ENCODE measurements at regions of chr18 and their contacts with region 1.

Region 1: GRCh38 chr18:75350512-75350839 is 77.0 kb downstream of the SMIM21 start:
- DNase-seq: no peak
- ATAC-seq: no peak
- H3K4me3 ChIP-seq: no peak overlapping the region
- H3K4me3 Mint-ChIP-seq: no peak overlapping the region
- H3K27ac ChIP-seq: no peak overlapping the region
- H3K27ac Mint-ChIP-seq: no peak overlapping the region
- H3K4me1 ChIP-seq: no peaks in the 10 kb centered on the region
- H3K4me1 Mint-ChIP-seq: no peaks in the 10 kb centered on the region
- H3K27me3 ChIP-seq: peaks cover 0 to 10% of the 10 kb centered on the region in 2 experiments
- H3K27me3 Mint-ChIP-seq: peaks cover 3 to 15% of the 10 kb centered on the region in 2 donors

Region 2: GRCh38 chr18:75280427-75281280 is 69.8 kb before region 1 on chr18:
- CTCF ChIA-PET with region 1: no interaction called
- POLR2A ChIA-PET with region 1: no interaction called
- DNase-seq: no peak
- ATAC-seq: no peak
- H3K4me3 ChIP-seq: no peak overlapping the region
- H3K4me3 Mint-ChIP-seq: no peak overlapping the region
- H3K27ac ChIP-seq: no peak overlapping the region
- H3K27ac Mint-ChIP-seq: peak overlapping the region; percentile 3 to 52
- H3K4me1 ChIP-seq: peaks cover 2 to 22% of the 10 kb centered on the region in 2 experiments
- H3K4me1 Mint-ChIP-seq: peaks cover 40 to 65% (median 50%) of the 10 kb centered on the region in 3 donors
- H3K27me3 ChIP-seq: no peaks in the 10 kb centered on the region
- H3K27me3 Mint-ChIP-seq: no peaks in the 10 kb centered on the region

Region 3: GRCh38 chr18:75405351-75405750 is 54.9 kb after region 1 on chr18:
- CTCF ChIA-PET with region 1: no interaction called
- POLR2A ChIA-PET with region 1: interaction called in 1 of 2 experiments, 11 read pairs
- DNase-seq: no peak
- ATAC-seq: no peak
- H3K4me3 ChIP-seq: no peak overlapping the region
- H3K4me3 Mint-ChIP-seq: no peak overlapping the region
- H3K27ac ChIP-seq: no peak overlapping the region
- H3K27ac Mint-ChIP-seq: no peak overlapping the region
- H3K4me1 ChIP-seq: no peaks in the 10 kb centered on the region
- H3K4me1 Mint-ChIP-seq: peaks cover 2 to 9% (median 5%) of the 10 kb centered on the region in 3 donors
- H3K27me3 ChIP-seq: peaks cover 0 to 10% of the 10 kb centered on the region in 2 experiments
- H3K27me3 Mint-ChIP-seq: peaks cover 8 to 19% of the 10 kb centered on the region in 2 donors

Region 4: DNA sequence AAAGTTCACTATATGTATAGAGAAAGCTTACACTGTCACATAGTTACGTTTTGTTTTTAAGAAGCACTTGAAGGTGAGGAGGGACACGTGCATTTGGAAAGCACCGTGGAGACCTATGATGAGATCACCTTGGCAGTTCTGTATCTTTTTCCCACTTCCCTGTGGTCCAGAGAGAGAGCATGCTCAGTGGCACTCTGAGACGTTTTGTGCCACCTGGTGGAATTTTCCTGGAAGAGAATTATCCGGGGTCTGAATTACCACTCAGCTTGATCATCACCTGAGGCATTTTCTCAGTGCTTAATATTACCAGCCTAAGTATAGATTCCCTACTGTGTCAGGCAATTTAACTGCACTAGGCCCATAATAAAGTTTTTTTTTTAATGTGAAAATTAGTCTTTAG is 546.4 kb after region 1 on chr18:
- CTCF ChIA-PET with region 1: no interaction called
- POLR2A ChIA-PET with region 1: no interaction called
- DNase-seq: no peak
- ATAC-seq: no peak
- H3K4me3 ChIP-seq: no peak overlapping the region
- H3K4me3 Mint-ChIP-seq: no peak overlapping the region
- H3K27ac ChIP-seq: no peak overlapping the region
- H3K27ac Mint-ChIP-seq: no peak overlapping the region
- H3K4me1 ChIP-seq: no peaks in the 10 kb centered on the region
- H3K4me1 Mint-ChIP-seq: no peaks in the 10 kb centered on the region
- H3K27me3 ChIP-seq: peaks cover 0 to 2% of the 10 kb centered on the region in 2 experiments
- H3K27me3 Mint-ChIP-seq: peaks cover 0 to 2% of the 10 kb centered on the region in 2 donors

Measured in T-cell (primary cell).